ENCODE measurements at regions of chr10 and their contacts with region 1.

Region 1: DNA sequence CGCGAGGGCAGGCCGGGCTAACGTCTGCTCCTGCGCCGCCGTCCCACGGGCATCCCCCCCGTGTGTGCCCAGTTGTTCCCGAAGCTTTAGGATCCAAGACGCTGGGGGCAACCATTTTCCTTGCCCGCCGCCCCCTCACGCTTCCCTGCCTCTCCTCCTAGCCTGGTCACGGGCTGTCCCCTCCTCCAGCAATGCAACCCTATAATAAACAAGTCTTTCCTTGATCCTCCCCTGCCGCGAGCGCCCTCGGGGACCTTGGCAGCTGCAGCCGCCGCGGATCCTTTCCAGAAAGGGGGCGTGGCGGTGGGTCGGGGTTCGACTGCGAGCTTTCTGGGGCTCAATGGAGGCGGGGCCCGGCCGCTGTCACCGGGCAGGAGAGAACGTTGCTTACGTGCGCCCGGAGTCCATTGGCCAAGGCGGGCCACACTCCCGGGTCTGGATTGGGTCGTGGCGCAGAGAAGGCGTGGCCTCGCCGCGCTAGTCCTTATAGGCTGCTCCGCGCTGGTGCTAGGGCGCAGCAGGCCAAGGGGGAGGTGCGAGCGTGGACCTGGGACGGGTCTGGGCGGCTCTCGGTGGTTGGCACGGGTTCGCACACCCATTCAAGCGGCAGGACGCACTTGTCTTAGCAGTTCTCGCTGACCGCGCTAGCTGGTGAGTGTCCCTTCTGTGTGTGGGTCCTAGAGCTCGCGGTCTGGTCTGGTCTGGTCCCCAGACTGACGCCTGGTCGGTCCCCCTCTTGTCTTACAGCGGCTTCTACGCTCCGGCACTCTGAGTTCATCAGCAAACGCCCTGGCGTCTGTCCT is at the start of gene DDIT4:
- DNase-seq: peak; percentile 97
- ATAC-seq: peak; percentile 89
- H3K4me3 ChIP-seq: peak within 1 kb of the TSS; percentile 92
- H3K27ac ChIP-seq: peak within 1 kb of the TSS; percentile 96
- H3K4me1 ChIP-seq: peaks cover 12% of the 10 kb centered on the region
- H3K27me3 ChIP-seq: no peaks in the 10 kb centered on the region
- CTCF ChIP-seq: no peak
- EP300 ChIP-seq: 0 out of 4 replicates have a peak, but pooled peaks have one; percentile 37 to 39
- POLR2A ChIP-seq: peak; percentile 100
- RAD21 ChIP-seq: 0 out of 2 replicates have a peak, but pooled peaks have one; percentile 16
- polyA plus RNA-seq, gene DDIT4: 2.1 to 5.0 TPM

Region 2: GRCh38 chr10:72215652-72216549 is 57.7 kb before region 1 on chr10 and contains the starts of genes ANAPC16 and ASCC1:
- CTCF ChIA-PET with region 1: interaction called, 6 read pairs
- POLR2A ChIA-PET with region 1: interaction called, 18 read pairs
- RAD21 ChIA-PET with region 1: interaction called, 10 read pairs
- SMC1A ChIA-PET with region 1: interaction called, 7 read pairs
- in situ Hi-C with region 1: no loop called
- intact Hi-C with region 1: no loop called
- DNase-seq: peak; percentile 84
- ATAC-seq: peak; percentile 90
- H3K4me3 ChIP-seq: peak within 1 kb of the TSS; percentile 89
- H3K27ac ChIP-seq: peak within 1 kb of the TSS; percentile 91
- H3K4me1 ChIP-seq: peaks cover 29% of the 10 kb centered on the region
- H3K27me3 ChIP-seq: no peaks in the 10 kb centered on the region
- CTCF ChIP-seq: no peak
- EP300 ChIP-seq: no peak
- POLR2A ChIP-seq: peak; percentile 97
- RAD21 ChIP-seq: no peak
- polyA plus RNA-seq, gene ANAPC16: 178 to 208 TPM
- polyA plus RNA-seq, gene ASCC1: 41.6 to 49.9 TPM

Region 3: DNA sequence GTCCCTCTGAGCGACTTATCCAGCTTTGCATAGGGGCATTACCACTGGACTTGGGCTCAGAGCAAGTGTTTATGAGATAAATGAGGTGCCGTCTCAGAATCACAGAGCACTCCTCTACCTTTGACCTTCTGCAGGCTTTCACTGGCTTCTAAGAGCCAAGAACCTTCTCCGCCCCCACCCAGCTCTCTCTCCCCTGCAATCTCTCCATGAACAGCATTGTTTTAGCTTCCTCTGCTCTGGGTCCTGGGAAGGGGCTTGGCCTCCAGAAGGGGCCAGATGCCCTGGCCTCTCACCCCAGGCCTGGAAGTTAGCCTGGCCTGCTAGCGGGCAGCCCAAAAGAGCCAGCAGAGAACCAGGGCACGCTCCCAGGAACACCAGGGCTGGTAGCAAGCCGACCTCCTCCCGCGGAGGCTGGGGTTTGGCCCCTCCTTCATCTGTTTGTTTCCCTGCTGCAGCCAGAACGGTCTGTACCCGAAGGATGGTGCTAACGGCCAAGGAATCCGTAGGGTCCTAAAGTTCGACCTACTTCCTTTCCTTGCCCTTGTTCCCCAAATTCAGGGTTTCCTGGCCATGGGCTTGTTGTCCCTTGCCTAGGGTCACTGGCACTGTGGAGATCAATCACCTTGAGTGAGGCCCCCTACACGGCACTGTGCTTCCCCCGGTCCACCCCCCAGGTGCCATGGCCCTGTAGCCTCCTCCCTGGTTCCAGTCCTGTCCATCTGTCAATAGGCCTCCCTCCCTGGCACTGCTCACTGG is 18.6 kb before region 1 on chr10:
- CTCF ChIA-PET with region 1: interaction called, 59 read pairs
- POLR2A ChIA-PET with region 1: interaction called, 267 read pairs
- RAD21 ChIA-PET with region 1: interaction called, 200 read pairs
- SMC1A ChIA-PET with region 1: interaction called, 275 read pairs
- in situ Hi-C with region 1: no loop called
- intact Hi-C with region 1: no loop called
- DNase-seq: no peak
- ATAC-seq: peak; percentile 73
- H3K4me3 ChIP-seq: peak overlapping the region; percentile 10; the same call in 1 of the 2 replicates
- H3K27ac ChIP-seq: peak overlapping the region; percentile 90
- H3K4me1 ChIP-seq: peaks cover 72% of the 10 kb centered on the region
- H3K27me3 ChIP-seq: no peaks in the 10 kb centered on the region
- CTCF ChIP-seq: peak in 1 of 3 experiments; percentile 33; a peak in 2 of 6 replicates
- EP300 ChIP-seq: no peak
- POLR2A ChIP-seq: peak; percentile 69
- RAD21 ChIP-seq: peak; percentile 40

Region 4: GRCh38 chr10:72292223-72292691 is 18.6 kb after region 1 on chr10:
- CTCF ChIA-PET with region 1: interaction called, 16 read pairs
- POLR2A ChIA-PET with region 1: interaction called, 59 read pairs
- RAD21 ChIA-PET with region 1: interaction called, 34 read pairs
- SMC1A ChIA-PET with region 1: interaction called, 43 read pairs
- in situ Hi-C with region 1: no loop called
- intact Hi-C with region 1: loop called (anchors 1 kb)
- DNase-seq: no peak
- ATAC-seq: peak; percentile 8; the same call in 2 of the 3 replicates
- H3K4me3 ChIP-seq: no peak overlapping the region
- H3K27ac ChIP-seq: peak overlapping the region; percentile 54
- H3K4me1 ChIP-seq: peaks cover 49% of the 10 kb centered on the region
- H3K27me3 ChIP-seq: no peaks in the 10 kb centered on the region
- CTCF ChIP-seq: no peak
- EP300 ChIP-seq: no peak
- POLR2A ChIP-seq: no peak
- RAD21 ChIP-seq: no peak

Region 5: GRCh38 chr10:72319416-72320254 is 46.0 kb after region 1 on chr10:
- CTCF ChIA-PET with region 1: interaction called, 29 read pairs
- POLR2A ChIA-PET with region 1: interaction called, 75 read pairs
- RAD21 ChIA-PET with region 1: interaction called, 39 read pairs
- SMC1A ChIA-PET with region 1: interaction called, 20 read pairs
- in situ Hi-C with region 1: no loop called
- intact Hi-C with region 1: loop called (anchors 1 kb)
- DNase-seq: no peak
- ATAC-seq: peak; percentile 81
- H3K4me3 ChIP-seq: peak overlapping the region; percentile 76
- H3K27ac ChIP-seq: peak overlapping the region; percentile 89
- H3K4me1 ChIP-seq: peaks cover 59% of the 10 kb centered on the region
- H3K27me3 ChIP-seq: no peaks in the 10 kb centered on the region
- CTCF ChIP-seq: no peak
- EP300 ChIP-seq: 0 out of 4 replicates have a peak, but pooled peaks of 1 of the 2 experiments have one; percentile 59
- POLR2A ChIP-seq: peak; percentile 84
- RAD21 ChIP-seq: no peak

Region 6: GRCh38 chr10:72354478-72355213 is 81.0 kb after region 1 on chr10 and contains the start of gene DNAJB12:
- CTCF ChIA-PET with region 1: no interaction called
- POLR2A ChIA-PET with region 1: no interaction called
- RAD21 ChIA-PET with region 1: no interaction called
- SMC1A ChIA-PET with region 1: no interaction called
- in situ Hi-C with region 1: no loop called
- intact Hi-C with region 1: no loop called
- DNase-seq: peak; percentile 82
- ATAC-seq: peak; percentile 91
- H3K4me3 ChIP-seq: peak within 1 kb of the TSS; percentile 98
- H3K27ac ChIP-seq: peak within 1 kb of the TSS; percentile 87
- H3K4me1 ChIP-seq: peaks cover 7% of the 10 kb centered on the region
- H3K27me3 ChIP-seq: no peaks in the 10 kb centered on the region
- CTCF ChIP-seq: no peak
- EP300 ChIP-seq: no peak
- POLR2A ChIP-seq: peak; percentile 95
- RAD21 ChIP-seq: no peak
- polyA plus RNA-seq, gene DNAJB12: 4.6 to 7.6 TPM

Region 7: DNA sequence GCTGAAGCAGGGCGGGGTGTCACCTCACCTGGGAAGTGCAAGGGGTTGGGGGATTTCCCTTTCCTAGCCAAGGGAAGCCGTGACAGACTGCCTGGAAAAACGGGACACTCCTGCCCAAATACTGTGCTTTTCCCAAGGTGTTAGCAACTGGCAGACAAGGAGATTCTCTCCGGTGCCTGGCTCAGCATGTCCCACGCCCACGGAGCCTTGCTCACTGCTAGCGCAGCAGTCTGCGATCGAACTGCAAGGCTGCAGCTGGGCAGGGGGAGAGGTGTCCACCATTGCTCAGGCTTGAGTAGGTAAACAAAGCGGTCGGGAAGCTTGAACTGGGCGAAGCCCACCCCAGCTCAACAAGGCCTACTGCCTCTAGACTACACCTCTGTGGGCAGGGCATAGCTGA is 162.0 kb after region 1 on chr10:
- CTCF ChIA-PET with region 1: no interaction called
- POLR2A ChIA-PET with region 1: no interaction called
- RAD21 ChIA-PET with region 1: no interaction called
- SMC1A ChIA-PET with region 1: no interaction called
- in situ Hi-C with region 1: no loop called
- intact Hi-C with region 1: no loop called
- DNase-seq: no peak
- ATAC-seq: no peak
- H3K4me3 ChIP-seq: no peak overlapping the region
- H3K27ac ChIP-seq: no peak overlapping the region
- H3K4me1 ChIP-seq: no peaks in the 10 kb centered on the region
- H3K27me3 ChIP-seq: no peaks in the 10 kb centered on the region
- CTCF ChIP-seq: no peak
- EP300 ChIP-seq: no peak
- POLR2A ChIP-seq: no peak
- RAD21 ChIP-seq: no peak